GM12878 (cell line): ENCODE measurements at regions of chr11 and their contacts with region 1.

Region 1: GRCh38 chr11:113119966-113120736 is 158.9 kb downstream of the NCAM1 start:
- DNase-seq: no peak
- ATAC-seq: no peak
- H3K4me3 ChIP-seq: no peak overlapping the region
- H3K27ac ChIP-seq: no peak overlapping the region
- H3K4me1 ChIP-seq: no peaks in the 10 kb centered on the region
- H3K27me3 ChIP-seq: peaks cover 0 to 8% of the 10 kb centered on the region in 2 experiments; a peak in 1 of 4 replicates
- CTCF ChIP-seq: no peak
- EP300 ChIP-seq: no peak
- POLR2A ChIP-seq: no peak
- RAD21 ChIP-seq: no peak

Region 2: DNA sequence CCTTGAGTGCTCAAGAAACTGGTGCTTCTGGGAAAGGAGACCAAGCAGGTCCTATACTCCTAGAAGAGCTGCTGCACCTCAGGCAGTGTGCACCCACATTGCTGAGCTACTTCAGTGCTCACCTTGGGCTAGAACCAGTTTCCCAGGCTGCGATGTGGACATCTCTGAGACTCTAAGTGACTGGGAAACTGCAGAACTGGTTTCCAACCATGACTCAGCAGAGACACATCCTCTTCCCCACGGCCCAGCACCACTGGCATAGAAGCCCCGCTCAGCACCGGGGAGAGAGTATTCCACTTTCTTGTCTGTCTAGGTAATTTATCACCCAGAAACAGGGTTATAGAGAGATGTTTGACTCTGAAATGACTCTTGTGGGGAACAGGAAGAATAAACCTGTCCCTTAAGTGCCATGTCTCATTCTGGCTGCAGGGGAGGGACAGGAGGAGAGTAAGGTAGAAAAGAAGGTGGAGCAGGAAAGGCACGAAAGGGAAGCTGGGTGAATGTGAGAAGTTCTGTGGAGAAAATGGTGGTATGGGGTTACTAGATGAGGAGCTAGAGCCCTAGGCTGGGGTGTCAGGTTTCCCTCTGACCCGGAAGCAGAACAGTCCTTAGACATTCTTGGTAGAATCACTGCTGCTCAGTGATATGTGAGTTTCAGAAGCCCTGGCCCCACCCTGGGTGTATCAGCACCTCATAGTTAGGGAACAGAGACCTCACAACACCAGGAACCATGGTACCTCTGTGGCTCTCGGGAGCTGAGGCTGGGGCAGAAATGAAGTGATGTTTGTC is 499.4 kb before region 1 on chr11:
- CTCF ChIA-PET with region 1: no interaction called
- POLR2A ChIA-PET with region 1: no interaction called
- RAD21 ChIA-PET with region 1: no interaction called
- SMC1A ChIA-PET with region 1: no interaction called
- in situ Hi-C with region 1: no loop called
- intact Hi-C with region 1: no loop called
- DNase-seq: peak; percentile 37
- ATAC-seq: peak; percentile 44
- H3K4me3 ChIP-seq: no peak overlapping the region
- H3K27ac ChIP-seq: peak overlapping the region; percentile 50
- H3K4me1 ChIP-seq: peaks cover 27% of the 10 kb centered on the region
- H3K27me3 ChIP-seq: no peaks in the 10 kb centered on the region
- CTCF ChIP-seq: no peak
- EP300 ChIP-seq: no peak
- POLR2A ChIP-seq: no peak
- RAD21 ChIP-seq: no peak

Region 3: GRCh38 chr11:113162592-113162962 is 42.4 kb after region 1 on chr11:
- CTCF ChIA-PET with region 1: no interaction called
- POLR2A ChIA-PET with region 1: no interaction called
- RAD21 ChIA-PET with region 1: no interaction called
- SMC1A ChIA-PET with region 1: no interaction called
- in situ Hi-C with region 1: no loop called
- intact Hi-C with region 1: no loop called
- DNase-seq: no peak
- ATAC-seq: no peak
- H3K4me3 ChIP-seq: no peak overlapping the region
- H3K27ac ChIP-seq: no peak overlapping the region
- H3K4me1 ChIP-seq: no peaks in the 10 kb centered on the region
- H3K27me3 ChIP-seq: peaks cover 0 to 2% of the 10 kb centered on the region in 2 experiments; a peak in 2 of 4 replicates
- CTCF ChIP-seq: no peak
- EP300 ChIP-seq: no peak
- POLR2A ChIP-seq: no peak
- RAD21 ChIP-seq: no peak

Region 4: DNA sequence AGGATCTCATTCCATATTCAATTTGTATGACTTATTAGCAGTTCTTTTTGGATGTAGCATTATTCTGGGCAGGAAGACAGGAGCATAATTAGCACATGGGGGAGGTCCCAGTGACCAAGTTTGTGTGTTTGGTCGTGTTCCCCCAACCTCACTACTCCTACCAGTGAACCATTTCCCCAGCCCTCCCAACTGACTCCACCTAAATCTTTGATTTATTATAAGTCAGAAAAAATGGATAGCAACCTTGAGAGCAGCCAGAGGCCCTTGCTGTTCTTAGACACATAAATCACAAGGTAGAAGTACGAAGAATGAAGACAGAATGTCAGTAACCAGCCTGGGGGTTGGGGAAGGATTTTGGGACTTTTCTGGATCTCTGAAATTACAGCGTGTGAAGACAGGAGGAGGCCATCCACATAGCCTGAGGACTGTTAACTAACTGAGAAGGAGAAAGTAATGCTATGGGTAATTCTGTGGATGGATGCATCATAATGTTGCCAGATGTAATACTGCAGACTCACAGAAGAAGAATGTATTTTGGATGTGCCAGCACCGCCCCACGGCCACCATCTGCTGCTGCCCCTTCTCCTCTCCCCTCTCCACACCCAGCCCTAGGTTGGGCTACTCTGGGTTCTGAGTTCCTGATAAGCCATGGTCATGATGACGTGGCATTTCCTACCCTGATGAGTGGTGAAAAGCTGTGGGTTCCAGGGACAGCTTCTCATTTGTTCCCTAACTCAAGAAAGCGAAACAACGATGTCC is 69.9 kb after region 1 on chr11:
- CTCF ChIA-PET with region 1: no interaction called
- POLR2A ChIA-PET with region 1: no interaction called
- RAD21 ChIA-PET with region 1: no interaction called
- SMC1A ChIA-PET with region 1: no interaction called
- in situ Hi-C with region 1: no loop called
- intact Hi-C with region 1: loop called (anchors 10 kb)
- DNase-seq: no peak
- ATAC-seq: no peak
- H3K4me3 ChIP-seq: no peak overlapping the region
- H3K27ac ChIP-seq: no peak overlapping the region
- H3K4me1 ChIP-seq: peaks cover 5% of the 10 kb centered on the region
- H3K27me3 ChIP-seq: no peaks in the 10 kb centered on the region
- CTCF ChIP-seq: no peak
- EP300 ChIP-seq: no peak
- POLR2A ChIP-seq: no peak
- RAD21 ChIP-seq: no peak